Right cardiac atrium (tissue), 5 donors: ENCODE measurements at regions of chr1 and their contacts with region 1.

Region 1: DNA sequence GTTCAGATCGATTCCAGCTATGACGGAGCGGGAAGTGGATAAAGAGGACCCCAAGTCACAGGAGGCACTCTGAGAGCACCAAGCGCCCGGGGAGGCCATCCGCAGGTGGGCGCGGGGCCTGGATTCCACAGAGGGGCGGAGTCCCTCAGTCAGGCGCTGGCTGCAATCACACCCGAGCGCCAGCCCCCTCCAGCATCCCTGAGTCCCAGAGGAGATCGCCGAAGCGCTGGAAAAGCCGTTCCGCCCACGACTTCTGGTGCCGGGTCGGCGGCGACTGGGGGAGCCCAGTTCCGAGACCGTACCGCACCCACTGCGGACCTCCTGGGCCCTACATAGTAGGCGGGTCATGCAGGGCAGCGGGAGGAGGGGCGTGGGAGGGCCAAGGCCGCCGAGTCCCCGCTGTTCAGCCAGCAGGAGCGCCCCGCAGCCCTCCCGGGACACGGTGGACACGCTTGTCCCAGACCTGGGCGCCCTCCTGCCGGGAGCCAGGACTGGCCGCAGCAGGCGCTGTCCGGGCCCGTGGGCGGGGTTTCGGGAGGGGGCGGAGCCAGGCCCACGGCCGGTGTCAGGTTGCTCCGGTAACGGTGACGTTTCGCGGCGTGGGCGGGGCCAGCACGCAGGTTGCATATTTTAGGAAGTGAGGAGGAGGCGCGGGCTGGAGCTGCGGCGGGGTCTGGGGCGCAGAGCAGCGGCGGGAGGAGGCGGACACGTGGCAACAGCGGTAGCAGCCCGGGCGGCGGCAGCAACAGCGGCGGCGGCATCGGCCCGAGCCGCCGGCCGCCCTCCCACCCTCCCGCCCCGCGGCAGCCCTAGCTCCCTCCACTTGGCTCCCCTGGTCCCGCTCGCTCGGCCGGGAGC is at the start of gene ATP1A1:
- DNase-seq: peak; percentile 98 to 99 (median 99)
- ATAC-seq: peak; percentile 84 to 89
- H3K4me3 ChIP-seq: peak within 1 kb of the TSS; percentile 94
- H3K27ac ChIP-seq: peak within 1 kb of the TSS; percentile 98
- H3K4me1 ChIP-seq: peaks cover 6% of the 10 kb centered on the region
- H3K27me3 ChIP-seq: no peaks in the 10 kb centered on the region
- total RNA-seq, gene ATP1A1: 166 to 326 (median 226) TPM

Region 2: GRCh38 chr1:116151739-116152576 is 220.9 kb before region 1 on chr1:
- intact Hi-C with region 1: loop called in 1 of 4 experiments (anchors 10 kb)
- DNase-seq: peak; percentile 81 to 91 (median 91)
- ATAC-seq: peak; percentile 96 to 98
- H3K4me3 ChIP-seq: peak overlapping the region; percentile 35
- H3K27ac ChIP-seq: no peak overlapping the region
- H3K4me1 ChIP-seq: peaks cover 5% of the 10 kb centered on the region
- H3K27me3 ChIP-seq: no peaks in the 10 kb centered on the region

Region 3: DNA sequence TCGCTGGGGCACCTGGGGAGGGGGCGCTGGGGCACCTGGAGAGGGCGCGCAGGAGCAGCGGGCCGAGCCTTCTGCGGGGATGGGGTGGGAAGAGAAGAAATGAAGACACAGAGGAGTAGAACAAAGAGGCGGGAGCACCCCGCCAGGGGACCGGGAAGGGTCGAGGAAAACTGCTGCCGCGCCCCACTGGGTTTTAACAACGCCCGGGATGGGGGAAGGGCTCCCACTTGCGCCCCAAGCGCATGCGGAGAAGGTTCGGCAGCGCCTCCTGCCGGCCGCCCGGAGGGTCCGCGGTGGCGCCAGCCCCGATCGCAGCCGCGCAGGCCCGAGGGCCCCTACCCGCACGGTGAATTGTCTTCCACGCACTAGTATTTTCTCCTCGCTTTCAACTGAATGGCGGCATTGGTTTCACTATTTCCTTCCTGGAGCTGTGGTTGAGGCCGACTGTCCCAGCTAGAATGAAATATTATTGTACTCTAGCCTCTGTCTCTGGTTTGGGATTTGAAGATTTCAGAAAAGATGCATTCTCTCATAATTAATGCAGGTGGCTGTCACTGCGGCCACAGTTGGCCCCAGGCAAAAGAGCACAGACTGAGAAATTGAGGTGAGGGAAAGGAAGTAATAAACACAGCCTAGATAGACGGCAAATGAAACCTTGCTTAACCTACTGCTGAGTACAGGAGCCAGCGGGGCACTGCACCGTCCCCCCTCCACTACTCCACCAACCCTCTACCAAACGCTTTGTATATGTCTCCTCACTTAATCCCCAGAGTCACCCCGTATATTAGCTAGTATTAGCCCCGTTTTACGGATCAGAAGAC is 204.3 kb before region 1 on chr1:
- intact Hi-C with region 1: loop called in 1 of 4 experiments (anchors 10 kb)
- DNase-seq: peak; percentile 90 to 95 (median 94)
- ATAC-seq: peak; percentile 83 to 89
- H3K4me3 ChIP-seq: peak overlapping the region; percentile 52
- H3K27ac ChIP-seq: peak overlapping the region; percentile 13
- H3K4me1 ChIP-seq: peaks cover 11% of the 10 kb centered on the region
- H3K27me3 ChIP-seq: no peaks in the 10 kb centered on the region